ENCODE measurements at regions of chr3 and their contacts with region 1.

Region 1: GRCh38 chr3:60081381-60082095 is 1031.7 kb upstream of the CFAP20DC start:
- DNase-seq: peak in 4 of 5 donors; percentile 30 to 40 (median 36)
- H3K4me3 ChIP-seq: peak overlapping the region in 1 of 2 donors; percentile 27
- H3K4me3 Mint-ChIP-seq: peak overlapping the region; percentile 74 to 96 (median 84)
- H3K27ac ChIP-seq: no peak overlapping the region
- H3K27ac Mint-ChIP-seq: peak overlapping the region; percentile 70 to 94 (median 86)
- H3K4me1 ChIP-seq: peaks cover 43% of the 10 kb centered on the region
- H3K4me1 Mint-ChIP-seq: peaks cover 29 to 50% (median 41%) of the 10 kb centered on the region in 4 donors
- H3K27me3 ChIP-seq: no peaks in the 10 kb centered on the region
- H3K27me3 Mint-ChIP-seq: no peaks in the 10 kb centered on the region

Region 2: GRCh38 chr3:61251174-61251972 is 1169.8 kb after region 1 on chr3 and contains the start of gene FHIT:
- CTCF ChIA-PET with region 1: no interaction called
- POLR2A ChIA-PET with region 1: no interaction called
- intact Hi-C with region 1: loop called (anchors 2 kb)
- DNase-seq: peak; percentile 85 to 88 (median 85)
- H3K4me3 ChIP-seq: peak within 1 kb of the TSS; percentile 8 to 62
- H3K4me3 Mint-ChIP-seq: peak within 1 kb of the TSS; percentile 87 to 97 (median 92)
- H3K27ac ChIP-seq: peak within 1 kb of the TSS; percentile 59
- H3K27ac Mint-ChIP-seq: peak within 1 kb of the TSS; percentile 81 to 97 (median 89)
- H3K4me1 ChIP-seq: peaks cover 19% of the 10 kb centered on the region
- H3K4me1 Mint-ChIP-seq: peaks cover 16 to 25% (median 20%) of the 10 kb centered on the region in 4 donors
- H3K27me3 ChIP-seq: no peaks in the 10 kb centered on the region
- H3K27me3 Mint-ChIP-seq: peaks cover 0 to 4% of the 10 kb centered on the region in 2 donors
- total RNA-seq, gene FHIT: 48.3 to 58.7 TPM